CD4-positive, alpha-beta memory T cell (primary cell): ENCODE measurements at regions of chr1 and their contacts with region 1.

Region 1: DNA sequence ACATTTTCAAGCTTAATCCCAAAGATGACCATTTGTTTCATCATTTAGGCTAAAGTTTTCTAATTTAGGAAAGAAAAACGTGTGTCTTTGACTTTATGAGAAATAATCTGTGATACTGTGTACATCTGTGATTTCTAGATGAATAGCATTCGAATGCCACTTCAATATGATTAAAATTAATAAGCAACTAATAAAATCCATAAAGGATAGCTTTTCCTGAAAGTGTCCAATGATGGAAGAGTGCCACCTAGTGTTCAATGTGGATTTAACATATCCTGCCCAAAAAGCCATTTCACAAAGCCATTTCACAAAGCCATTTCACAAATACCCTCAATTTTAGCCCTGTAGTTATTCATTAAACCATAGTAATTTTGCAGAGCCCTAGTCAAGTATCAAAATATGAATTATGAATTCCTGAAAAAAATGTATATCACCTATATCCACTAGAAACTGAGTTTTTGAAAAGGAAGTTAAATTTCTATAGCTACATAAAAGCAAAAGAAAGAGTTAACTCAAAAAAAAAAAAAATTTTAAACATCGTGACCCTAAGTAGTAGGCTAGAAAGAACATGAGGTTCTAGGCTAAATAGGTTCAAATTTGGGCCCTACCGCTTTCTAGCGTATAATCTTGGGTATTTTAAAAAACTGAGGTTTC is 19.1 kb downstream of the NME7 start:
- DNase-seq: peak in 4 of 5 donors; percentile 44 to 52 (median 47)
- H3K4me3 ChIP-seq: no peak overlapping the region
- H3K4me3 Mint-ChIP-seq: no peak overlapping the region
- H3K27ac ChIP-seq: no peak overlapping the region
- H3K27ac Mint-ChIP-seq: no peak overlapping the region
- H3K4me1 ChIP-seq: no peaks in the 10 kb centered on the region
- H3K4me1 Mint-ChIP-seq: peaks cover 0 to 3% (median under 1%) of the 10 kb centered on the region in 4 donors
- H3K27me3 ChIP-seq: no peaks in the 10 kb centered on the region
- H3K27me3 Mint-ChIP-seq: peaks cover 0 to 1% of the 10 kb centered on the region in 2 donors

Region 2: GRCh38 chr1:168603501-168604110 is 744.9 kb before region 1 on chr1:
- CTCF ChIA-PET with region 1: interaction called, 131 read pairs
- POLR2A ChIA-PET with region 1: no interaction called
- intact Hi-C with region 1: no loop called
- DNase-seq: peak; percentile 53 to 61 (median 57)
- H3K4me3 ChIP-seq: no peak overlapping the region
- H3K4me3 Mint-ChIP-seq: no peak overlapping the region
- H3K27ac ChIP-seq: no peak overlapping the region
- H3K27ac Mint-ChIP-seq: peak overlapping the region in 1 of 7 donors; percentile 58
- H3K4me1 ChIP-seq: no peaks in the 10 kb centered on the region
- H3K4me1 Mint-ChIP-seq: no peaks in the 10 kb centered on the region
- H3K27me3 ChIP-seq: no peaks in the 10 kb centered on the region
- H3K27me3 Mint-ChIP-seq: no peaks in the 10 kb centered on the region

Region 3: GRCh38 chr1:169321552-169321951 is 27.0 kb before region 1 on chr1:
- CTCF ChIA-PET with region 1: no interaction called
- POLR2A ChIA-PET with region 1: no interaction called
- intact Hi-C with region 1: no loop called
- DNase-seq: no peak
- H3K4me3 ChIP-seq: no peak overlapping the region
- H3K4me3 Mint-ChIP-seq: no peak overlapping the region
- H3K27ac ChIP-seq: no peak overlapping the region
- H3K27ac Mint-ChIP-seq: no peak overlapping the region
- H3K4me1 ChIP-seq: no peaks in the 10 kb centered on the region
- H3K4me1 Mint-ChIP-seq: peaks cover 0 to under 1% (median 0%) of the 10 kb centered on the region in 4 donors
- H3K27me3 ChIP-seq: no peaks in the 10 kb centered on the region
- H3K27me3 Mint-ChIP-seq: no peaks in the 10 kb centered on the region